SK-N-SH (cell line): ENCODE measurements at regions of chr5 and their contacts with region 1.

Region 1: DNA sequence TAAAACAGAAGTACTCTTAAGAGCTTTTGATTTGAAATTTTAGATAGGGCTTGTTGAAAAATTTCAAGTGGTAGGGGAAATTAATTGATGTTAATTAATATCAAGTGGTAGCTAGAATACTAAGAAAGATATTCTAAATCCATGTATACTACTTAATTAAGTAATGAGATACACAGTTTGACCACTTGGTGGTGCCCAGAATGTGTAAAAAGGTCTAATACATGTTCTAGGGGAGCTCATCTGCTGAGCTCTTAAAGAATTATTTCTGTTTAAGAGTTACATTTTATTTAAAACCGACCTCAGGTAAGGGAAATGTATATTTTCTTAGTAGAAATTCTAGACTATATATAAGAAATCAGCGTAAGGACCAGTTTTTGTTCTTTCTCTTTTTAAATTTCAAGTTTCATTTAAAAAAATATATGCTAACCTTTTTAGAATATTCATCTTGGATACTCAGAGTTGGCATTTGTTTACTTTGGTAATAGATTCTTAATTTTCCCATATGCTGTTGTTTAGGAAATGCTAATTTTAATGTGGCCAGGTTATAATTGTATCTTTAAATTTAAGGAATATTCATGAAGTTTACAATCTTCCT is 61.5 kb downstream of the LNPEP start:
- DNase-seq: peak; percentile 21
- H3K4me3 ChIP-seq: no peak overlapping the region
- H3K27ac ChIP-seq: no peak overlapping the region
- H3K4me1 ChIP-seq: no peaks in the 10 kb centered on the region
- H3K27me3 ChIP-seq: no peaks in the 10 kb centered on the region
- CTCF ChIP-seq: peak; percentile 74
- EP300 ChIP-seq: no peak
- RAD21 ChIP-seq: peak; percentile 74

Region 2: DNA sequence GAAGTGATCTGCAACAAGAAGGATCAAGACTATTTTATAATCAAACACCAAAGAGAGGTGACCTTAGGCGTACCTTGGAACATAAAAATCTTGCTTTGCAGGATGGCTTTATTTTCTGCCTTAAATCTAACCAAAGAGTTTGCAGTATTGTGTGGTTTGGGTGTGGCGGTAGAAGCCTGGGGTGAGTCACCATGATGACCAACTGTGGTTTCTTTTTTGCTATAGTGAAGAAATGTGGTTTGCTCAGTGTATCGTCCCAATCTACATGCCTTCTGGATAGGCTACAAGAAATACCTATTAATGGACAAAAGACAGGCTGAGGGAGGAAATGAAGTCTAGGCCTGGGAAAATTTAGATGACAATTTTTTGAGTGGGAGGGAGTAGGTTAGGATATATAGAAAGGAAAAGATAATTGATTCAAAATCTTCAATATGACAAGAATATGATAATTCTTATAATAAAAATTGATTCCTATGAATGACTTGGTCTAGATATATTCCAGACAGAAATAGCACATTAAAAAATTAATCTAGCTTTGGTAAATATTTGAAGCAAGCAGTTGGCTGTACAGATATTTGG is 340.2 kb before region 1 on chr5:
- CTCF ChIA-PET with region 1: no interaction called
- POLR2A ChIA-PET with region 1: no interaction called
- DNase-seq: no peak
- H3K4me3 ChIP-seq: no peak overlapping the region
- H3K27ac ChIP-seq: peak overlapping the region; percentile 16 to 77; a peak in 3 of 4 replicates
- H3K4me1 ChIP-seq: peaks cover 12 to 30% of the 10 kb centered on the region in 2 experiments
- H3K27me3 ChIP-seq: no peaks in the 10 kb centered on the region
- CTCF ChIP-seq: no peak
- EP300 ChIP-seq: peak in 1 of 2 experiments; percentile 88; a peak in 2 of 4 replicates
- RAD21 ChIP-seq: no peak

Region 3: GRCh38 chr5:96986450-96986849 is 10.9 kb before region 1 on chr5:
- CTCF ChIA-PET with region 1: interaction called, 32 read pairs
- POLR2A ChIA-PET with region 1: no interaction called
- DNase-seq: no peak
- H3K4me3 ChIP-seq: no peak overlapping the region
- H3K27ac ChIP-seq: no peak overlapping the region
- H3K4me1 ChIP-seq: peaks cover 0 to 3% of the 10 kb centered on the region in 2 experiments; a peak in 1 of 4 replicates
- H3K27me3 ChIP-seq: no peaks in the 10 kb centered on the region
- CTCF ChIP-seq: no peak
- EP300 ChIP-seq: no peak
- RAD21 ChIP-seq: no peak

Region 4: DNA sequence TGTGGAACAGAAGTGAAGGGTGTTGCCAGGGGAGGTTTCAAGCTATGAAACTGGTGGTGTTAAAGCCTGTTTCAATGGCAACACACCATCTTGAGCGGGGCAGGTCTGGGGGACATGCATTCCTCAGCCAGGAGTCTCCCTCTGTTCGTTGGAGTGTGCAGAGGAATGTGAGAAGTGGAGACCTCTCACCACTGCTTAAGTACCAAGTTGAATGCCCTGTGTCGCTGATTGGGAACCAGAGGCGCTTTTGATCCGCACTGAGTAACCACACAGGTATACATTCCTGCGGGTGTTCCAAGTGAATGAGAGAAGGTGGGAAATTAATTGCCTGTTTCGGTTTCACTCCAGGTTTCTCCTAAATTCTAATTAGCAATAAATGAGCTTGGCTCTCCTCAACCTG is 45.6 kb after region 1 on chr5:
- CTCF ChIA-PET with region 1: interaction called, 11 read pairs
- POLR2A ChIA-PET with region 1: no interaction called
- DNase-seq: no peak
- H3K4me3 ChIP-seq: no peak overlapping the region
- H3K27ac ChIP-seq: no peak overlapping the region
- H3K4me1 ChIP-seq: no peaks in the 10 kb centered on the region
- H3K27me3 ChIP-seq: no peaks in the 10 kb centered on the region
- CTCF ChIP-seq: no peak
- EP300 ChIP-seq: no peak
- RAD21 ChIP-seq: no peak

Region 5: GRCh38 chr5:97131139-97131710 is 133.9 kb after region 1 on chr5:
- CTCF ChIA-PET with region 1: interaction called, 14 read pairs
- POLR2A ChIA-PET with region 1: no interaction called
- DNase-seq: no peak
- H3K4me3 ChIP-seq: no peak overlapping the region
- H3K27ac ChIP-seq: no peak overlapping the region
- H3K4me1 ChIP-seq: no peaks in the 10 kb centered on the region; a peak in 1 of 4 replicates
- H3K27me3 ChIP-seq: no peaks in the 10 kb centered on the region
- CTCF ChIP-seq: no peak
- EP300 ChIP-seq: no peak
- RAD21 ChIP-seq: no peak

Region 6: DNA sequence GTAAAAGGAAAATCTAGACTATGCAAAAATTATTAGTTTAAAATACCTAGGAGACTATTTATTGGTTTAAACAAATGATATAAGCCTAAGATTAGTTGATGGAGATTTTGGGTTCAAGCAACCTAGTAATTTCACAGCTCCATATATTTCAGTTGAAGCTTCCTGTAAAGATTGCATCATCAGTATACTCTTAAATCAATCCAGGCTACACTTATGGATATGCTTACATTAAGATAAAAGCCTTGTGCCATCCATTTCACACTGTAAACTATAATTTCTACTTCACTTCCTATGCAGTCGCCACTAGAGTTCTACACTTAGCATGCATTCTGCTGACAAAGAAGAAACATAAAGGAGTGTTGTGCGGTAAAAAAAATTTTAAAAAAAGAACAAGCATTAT is 152.3 kb after region 1 on chr5:
- CTCF ChIA-PET with region 1: interaction called, 18 read pairs
- POLR2A ChIA-PET with region 1: no interaction called
- DNase-seq: no peak
- H3K4me3 ChIP-seq: no peak overlapping the region
- H3K27ac ChIP-seq: no peak overlapping the region
- H3K4me1 ChIP-seq: no peaks in the 10 kb centered on the region
- H3K27me3 ChIP-seq: no peaks in the 10 kb centered on the region
- CTCF ChIP-seq: no peak
- EP300 ChIP-seq: no peak
- RAD21 ChIP-seq: no peak